HCT116 (cell line): ENCODE measurements at regions of chr6 and their contacts with region 1.

Region 1: GRCh38 chr6:122609856-122610689 is at the start of gene PKIB:
- DNase-seq: peak; percentile 75
- ATAC-seq: peak; percentile 94
- H3K4me3 ChIP-seq: peak within 1 kb of the TSS; percentile 55 to 79
- H3K27ac ChIP-seq: peak within 1 kb of the TSS; percentile 44
- H3K4me1 ChIP-seq: peaks cover 8 to 22% of the 10 kb centered on the region in 2 experiments; a peak in 3 of 4 replicates
- H3K27me3 ChIP-seq: no peaks in the 10 kb centered on the region
- CTCF ChIP-seq: peak in 2 of 3 experiments; percentile 44 to 51; a peak in 5 of 6 replicates
- POLR2A ChIP-seq: peak; percentile 38
- RAD21 ChIP-seq: peak; percentile 53
- total RNA-seq, gene PKIB: 24.0 TPM

Region 2: GRCh38 chr6:122620879-122621278 is 10.8 kb after region 1 on chr6:
- CTCF ChIA-PET with region 1: interaction called, 12 read pairs
- POLR2A ChIA-PET with region 1: interaction called, 4 read pairs
- RAD21 ChIA-PET with region 1: no interaction called
- intact Hi-C with region 1: no loop called
- DNase-seq: peak; percentile 34
- ATAC-seq: peak; percentile 81
- H3K4me3 ChIP-seq: no peak overlapping the region
- H3K27ac ChIP-seq: peak overlapping the region; percentile 50; the same call in 1 of the 2 replicates
- H3K4me1 ChIP-seq: peaks cover 19 to 25% of the 10 kb centered on the region in 2 experiments
- H3K27me3 ChIP-seq: no peaks in the 10 kb centered on the region
- CTCF ChIP-seq: no peak
- POLR2A ChIP-seq: no peak
- RAD21 ChIP-seq: no peak